ENCODE measurements at regions of chr19 and their contacts with region 1.

Region 1: DNA sequence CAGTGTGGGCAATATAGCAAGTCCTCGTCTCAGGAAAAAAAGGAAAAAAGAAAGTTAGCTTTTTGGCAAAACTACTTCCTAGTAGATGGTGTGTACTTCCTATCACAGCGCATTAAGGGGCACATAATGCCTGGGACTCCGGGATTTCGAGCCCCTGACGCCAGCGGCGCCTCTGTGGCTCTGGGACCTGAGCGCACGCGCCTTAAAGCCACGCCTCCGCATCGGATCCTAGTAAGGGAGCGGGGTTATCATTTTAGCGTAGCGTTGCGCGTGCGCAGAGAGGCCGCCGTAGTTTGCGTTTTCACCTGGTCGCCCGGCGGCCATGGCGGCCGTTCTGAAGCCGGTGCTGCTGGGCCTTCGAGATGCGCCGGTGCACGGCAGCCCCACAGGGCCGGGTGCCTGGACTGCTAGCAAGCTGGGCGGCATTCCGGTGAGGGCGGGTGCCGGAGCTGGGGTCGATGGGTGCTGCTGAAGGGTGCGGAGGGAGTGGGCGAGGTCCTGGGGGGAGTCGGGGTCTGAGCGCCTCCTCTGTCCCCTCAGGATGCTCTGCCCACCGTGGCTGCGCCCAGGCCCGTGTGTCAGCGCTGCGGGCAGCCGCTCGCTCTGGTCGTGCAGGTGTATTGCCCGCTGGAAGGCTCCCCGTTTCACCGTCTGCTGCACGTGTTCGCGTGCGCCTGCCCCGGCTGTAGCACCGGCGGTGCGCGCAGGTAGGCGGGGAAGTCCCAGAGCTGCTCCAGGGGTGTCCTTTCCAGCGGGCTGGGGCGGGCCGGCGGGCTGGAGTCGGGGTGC is at the start of gene PDCD2L:
- DNase-seq: peak; percentile 96
- H3K4me3 Mint-ChIP-seq: peak within 1 kb of the TSS; percentile 87
- H3K27ac Mint-ChIP-seq: peak within 1 kb of the TSS; percentile 71
- H3K4me1 Mint-ChIP-seq: peaks cover 24% of the 10 kb centered on the region
- H3K27me3 Mint-ChIP-seq: no peaks in the 10 kb centered on the region
- total RNA-seq, gene PDCD2L: 24.8 to 34.1 TPM

Region 2: DNA sequence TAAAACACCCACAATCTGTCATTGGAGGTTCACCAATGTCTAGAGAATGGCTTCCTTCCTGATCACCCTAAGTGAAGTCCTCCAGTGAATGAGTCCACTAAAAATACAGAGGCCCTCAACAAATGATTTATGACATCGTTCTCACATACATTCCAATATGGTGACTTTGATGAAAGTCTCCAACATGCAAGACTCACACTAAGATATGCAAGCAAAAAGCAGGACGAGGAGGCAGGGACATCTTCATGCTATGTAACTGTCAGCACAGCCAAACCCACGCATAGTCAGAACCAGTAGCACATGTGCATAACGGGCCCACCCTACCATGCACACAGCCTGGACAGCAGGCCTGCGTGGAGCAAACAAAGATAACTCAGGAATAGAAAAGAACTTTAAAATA is 248.6 kb before region 1 on chr19:
- CTCF ChIA-PET with region 1: no interaction called
- intact Hi-C with region 1: no loop called
- DNase-seq: no peak
- H3K4me3 Mint-ChIP-seq: no peak overlapping the region
- H3K27ac Mint-ChIP-seq: no peak overlapping the region
- H3K4me1 Mint-ChIP-seq: no peaks in the 10 kb centered on the region
- H3K27me3 Mint-ChIP-seq: no peaks in the 10 kb centered on the region

Region 3: GRCh38 chr19:34364830-34365462 is 39.4 kb before region 1 on chr19 and contains the start of gene GPI:
- CTCF ChIA-PET with region 1: no interaction called
- intact Hi-C with region 1: loop called (anchors 2 kb)
- DNase-seq: peak; percentile 67
- H3K4me3 Mint-ChIP-seq: peak within 1 kb of the TSS; percentile 94
- H3K27ac Mint-ChIP-seq: peak within 1 kb of the TSS; percentile 74
- H3K4me1 Mint-ChIP-seq: peaks cover 47% of the 10 kb centered on the region
- H3K27me3 Mint-ChIP-seq: no peaks in the 10 kb centered on the region
- total RNA-seq, gene GPI: 542 to 553 TPM

Region 4: GRCh38 chr19:35342430-35342829 is 938.1 kb after region 1 on chr19:
- CTCF ChIA-PET with region 1: no interaction called
- intact Hi-C with region 1: no loop called
- DNase-seq: no peak
- H3K4me3 Mint-ChIP-seq: no peak overlapping the region
- H3K27ac Mint-ChIP-seq: no peak overlapping the region
- H3K4me1 Mint-ChIP-seq: peaks cover 18% of the 10 kb centered on the region
- H3K27me3 Mint-ChIP-seq: peaks cover 2% of the 10 kb centered on the region